ENCODE measurements at regions of chr5 and their contacts with region 1.

Region 1: GRCh38 chr5:149636851-149637246 is 55.6 kb downstream of the ARHGEF37 start:
- DNase-seq: peak; percentile 71
- CTCF ChIP-seq: peak; percentile 67

Region 2: GRCh38 chr5:149828161-149828884 is 191.5 kb after region 1 on chr5:
- in situ Hi-C with region 1: loop called (anchors 10 kb)
- DNase-seq: peak; percentile 89
- CTCF ChIP-seq: peak; percentile 85

Region 3: GRCh38 chr5:149988126-149988525 is 351.3 kb after region 1 on chr5:
- in situ Hi-C with region 1: loop called (anchors 10 kb)
- DNase-seq: no peak
- CTCF ChIP-seq: no peak

Region 4: GRCh38 chr5:150217873-150218692 is 581.2 kb after region 1 on chr5:
- in situ Hi-C with region 1: loop called (anchors 25 kb)
- DNase-seq: peak; percentile 91
- CTCF ChIP-seq: peak; percentile 92

Measured in GM13977 (cell line).